ENCODE measurements at regions of chr12 and their contacts with region 1.

Region 1: DNA sequence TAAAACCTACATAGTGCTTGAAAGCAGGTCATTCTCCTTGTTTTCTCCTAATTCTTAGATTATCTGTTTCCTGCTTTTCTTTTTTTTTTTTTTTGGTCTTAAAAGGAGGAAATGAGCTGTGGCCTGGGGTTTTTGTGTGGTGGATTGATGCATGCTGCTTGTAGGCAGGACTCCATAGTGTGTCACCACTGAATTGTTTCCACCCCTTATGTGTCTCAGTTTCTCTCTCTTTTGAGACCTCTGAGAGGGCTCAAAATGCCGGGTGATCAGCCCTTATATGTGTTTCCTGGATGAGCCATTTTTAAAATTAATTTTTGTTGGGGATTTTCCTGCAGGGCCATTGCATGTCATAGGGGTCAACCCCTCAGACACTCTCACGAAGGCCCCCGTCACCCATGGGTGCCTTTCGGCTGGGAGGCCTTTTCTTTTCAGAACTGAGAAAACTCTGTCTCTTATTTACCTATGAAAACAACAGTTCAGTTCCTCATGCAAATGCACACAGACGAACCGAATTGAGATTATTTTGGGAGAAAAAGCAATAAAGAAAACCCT is 32.0 kb upstream of the LRRK2 start:
- DNase-seq: no peak
- H3K4me3 ChIP-seq: no peak overlapping the region
- H3K27ac ChIP-seq: no peak overlapping the region
- H3K4me1 ChIP-seq: no peaks in the 10 kb centered on the region
- H3K27me3 ChIP-seq: no peaks in the 10 kb centered on the region

Region 2: DNA sequence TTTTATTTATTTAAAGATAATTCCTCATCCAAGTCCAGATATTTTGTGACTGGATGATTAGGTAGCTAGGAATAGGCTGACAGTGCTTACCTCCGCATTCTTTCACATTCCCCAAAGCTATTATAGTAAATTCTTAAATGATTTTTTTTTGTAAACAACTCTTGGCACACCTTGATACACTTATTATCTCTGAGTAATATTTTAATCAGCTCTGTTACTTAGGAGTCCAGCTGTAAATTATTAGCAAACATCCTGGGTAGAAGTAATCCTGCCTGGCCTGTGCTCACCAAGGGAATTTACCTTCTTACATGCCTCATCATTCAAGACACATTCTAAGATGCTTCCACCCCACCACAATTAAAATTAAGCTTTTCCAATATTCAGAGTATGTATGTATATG is 273.0 kb before region 1 on chr12:
- in situ Hi-C with region 1: no loop called
- DNase-seq: no peak
- H3K4me3 ChIP-seq: no peak overlapping the region
- H3K27ac ChIP-seq: no peak overlapping the region
- H3K4me1 ChIP-seq: no peaks in the 10 kb centered on the region
- H3K27me3 ChIP-seq: no peaks in the 10 kb centered on the region

Region 3: DNA sequence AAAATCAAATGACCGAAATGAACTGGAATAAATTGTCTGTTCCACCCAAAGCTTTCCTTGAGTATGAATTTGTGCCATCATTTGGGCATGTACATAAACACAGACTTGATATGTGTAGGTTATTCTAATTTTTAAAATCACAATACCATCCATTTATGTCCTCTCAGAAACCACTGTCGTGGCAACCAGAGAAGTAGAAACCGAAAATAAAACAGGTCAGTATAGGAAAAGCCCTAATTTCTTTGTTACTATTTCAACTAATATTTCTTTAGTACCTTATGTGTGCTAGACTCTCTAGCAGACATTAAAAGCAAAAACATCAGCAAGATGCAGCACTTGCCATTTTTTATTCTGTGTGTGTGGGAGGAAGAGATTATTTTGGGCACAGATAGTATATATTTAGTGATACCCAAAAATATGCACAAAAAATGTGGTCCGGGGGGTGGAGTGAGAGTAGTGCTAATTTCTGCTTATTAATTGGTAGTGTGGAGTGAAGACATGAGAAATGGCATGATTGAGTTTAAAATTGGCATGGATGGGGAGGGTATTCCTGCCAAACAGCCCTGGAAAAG is 368.7 kb after region 1 on chr12:
- in situ Hi-C with region 1: loop called (anchors 25 kb)
- DNase-seq: no peak
- H3K4me3 ChIP-seq: no peak overlapping the region
- H3K27ac ChIP-seq: no peak overlapping the region
- H3K4me1 ChIP-seq: no peaks in the 10 kb centered on the region
- H3K27me3 ChIP-seq: no peaks in the 10 kb centered on the region